ENCODE measurements at regions of chr14 and their contacts with region 1.

Region 1: GRCh38 chr14:49687942-49688700 is at the start of gene POLE2:
- DNase-seq: peak; percentile 87
- ATAC-seq: peak; percentile 94
- H3K4me3 Mint-ChIP-seq: peak within 1 kb of the TSS; percentile 86
- H3K27ac Mint-ChIP-seq: peak within 1 kb of the TSS; percentile 96
- H3K4me1 Mint-ChIP-seq: peaks cover 34% of the 10 kb centered on the region
- H3K27me3 Mint-ChIP-seq: peaks cover 34% of the 10 kb centered on the region
- CTCF ChIP-seq: no peak
- total RNA-seq, gene POLE2: 24.0 to 24.6 TPM (median 24.4 TPM) in 3 replicates

Region 2: GRCh38 chr14:49767562-49768300 is 79.6 kb after region 1 on chr14 and contains the start of gene KLHDC2:
- CTCF ChIA-PET with region 1: interaction called, 11 read pairs
- POLR2A ChIA-PET with region 1: interaction called, 11 read pairs
- DNase-seq: peak; percentile 87
- ATAC-seq: peak; percentile 88
- H3K4me3 Mint-ChIP-seq: peak within 1 kb of the TSS; percentile 98
- H3K27ac Mint-ChIP-seq: peak within 1 kb of the TSS; percentile 100
- H3K4me1 Mint-ChIP-seq: peaks cover 24% of the 10 kb centered on the region
- H3K27me3 Mint-ChIP-seq: no peaks in the 10 kb centered on the region
- CTCF ChIP-seq: no peak
- total RNA-seq, gene KLHDC2: 38.7 to 47.6 TPM (median 42.5 TPM) in 3 replicates

Region 3: GRCh38 chr14:49940808-49941421 is 252.8 kb after region 1 on chr14:
- CTCF ChIA-PET with region 1: no interaction called
- POLR2A ChIA-PET with region 1: no interaction called
- DNase-seq: no peak
- ATAC-seq: no peak
- H3K4me3 Mint-ChIP-seq: no peak overlapping the region
- H3K27ac Mint-ChIP-seq: no peak overlapping the region
- H3K4me1 Mint-ChIP-seq: no peaks in the 10 kb centered on the region
- H3K27me3 Mint-ChIP-seq: peaks cover 10% of the 10 kb centered on the region; the same call in 1 of the 2 replicates
- CTCF ChIP-seq: no peak

Measured in WTC11 (cell line).